HepG2 (cell line): ENCODE measurements at regions of chr1 and their contacts with region 1.

Region 1: GRCh38 chr1:38859561-38860453 is at the start of gene RRAGC:
- DNase-seq: peak; percentile 95
- ATAC-seq: peak; percentile 96
- H3K4me3 ChIP-seq: peak within 1 kb of the TSS; percentile 77 to 98 (median 97)
- H3K27ac ChIP-seq: peak within 1 kb of the TSS; percentile 67
- H3K4me1 ChIP-seq: peaks cover 59% of the 10 kb centered on the region
- H3K27me3 ChIP-seq: no peaks in the 10 kb centered on the region; a peak in 1 of 5 replicates
- CTCF ChIP-seq: no peak
- EP300 ChIP-seq: peak; percentile 41 to 42; a peak in 3 of 4 replicates
- POLR2A ChIP-seq: peak; percentile 40 to 66
- RAD21 ChIP-seq: no peak; the same call in 1 of the 2 replicates
- total RNA-seq, gene RRAGC: 7.6 and 15.4 TPM in 2 replicates

Region 2: DNA sequence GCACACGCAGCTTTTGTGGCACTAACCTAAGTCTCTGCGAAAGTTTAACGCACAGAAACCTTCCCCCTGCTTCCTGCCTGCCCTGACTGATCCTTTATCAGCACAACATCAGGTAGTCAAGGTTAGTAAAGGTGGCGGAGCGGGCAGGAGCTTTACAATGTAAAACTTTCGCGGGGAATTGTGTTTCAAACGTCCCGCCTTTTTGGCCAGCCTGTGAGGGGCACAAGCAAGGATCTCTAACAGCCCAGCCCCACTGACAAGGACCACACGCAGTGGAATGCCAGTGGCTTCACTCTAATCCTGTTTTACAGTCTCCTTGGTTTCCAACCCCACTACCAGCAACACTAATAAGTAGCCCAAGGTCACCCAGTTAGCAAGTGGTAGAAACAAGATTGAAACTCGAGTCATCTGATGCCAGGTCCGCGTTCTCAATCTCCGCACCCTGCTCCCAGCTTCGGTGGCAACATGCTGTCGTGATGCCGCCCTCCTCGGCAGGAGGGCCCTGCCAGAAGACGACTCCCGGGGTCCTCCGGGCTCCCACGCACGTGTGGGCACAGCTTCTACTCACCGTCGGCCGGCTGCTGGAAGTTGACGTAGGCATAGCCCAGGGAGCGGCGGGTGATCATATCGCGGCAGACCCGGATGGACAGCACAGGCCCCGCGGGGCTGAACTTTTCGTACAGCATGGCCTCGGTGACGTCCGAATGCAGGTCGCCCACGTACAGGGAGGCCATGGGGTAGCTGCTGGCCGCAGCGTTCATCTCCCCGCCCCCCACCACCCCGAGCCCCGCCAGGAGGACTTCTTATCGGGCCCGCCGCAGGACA is 715.6 kb after region 1 on chr1:
- CTCF ChIA-PET with region 1: no interaction called
- POLR2A ChIA-PET with region 1: no interaction called
- in situ Hi-C with region 1: no loop called
- intact Hi-C with region 1: loop called (anchors 5 kb)
- DNase-seq: peak; percentile 16
- ATAC-seq: peak; percentile 47
- H3K4me3 ChIP-seq: peak overlapping the region; percentile 86 to 99 (median 95)
- H3K27ac ChIP-seq: peak overlapping the region; percentile 80
- H3K4me1 ChIP-seq: peaks cover 44% of the 10 kb centered on the region
- H3K27me3 ChIP-seq: no peaks in the 10 kb centered on the region; a peak in 1 of 5 replicates
- CTCF ChIP-seq: no peak
- EP300 ChIP-seq: no peak
- POLR2A ChIP-seq: peak; percentile 28 to 36; a peak in 1 of 4 replicates
- RAD21 ChIP-seq: no peak